ENCODE measurements at regions of chr6 and their contacts with region 1.

Region 1: DNA sequence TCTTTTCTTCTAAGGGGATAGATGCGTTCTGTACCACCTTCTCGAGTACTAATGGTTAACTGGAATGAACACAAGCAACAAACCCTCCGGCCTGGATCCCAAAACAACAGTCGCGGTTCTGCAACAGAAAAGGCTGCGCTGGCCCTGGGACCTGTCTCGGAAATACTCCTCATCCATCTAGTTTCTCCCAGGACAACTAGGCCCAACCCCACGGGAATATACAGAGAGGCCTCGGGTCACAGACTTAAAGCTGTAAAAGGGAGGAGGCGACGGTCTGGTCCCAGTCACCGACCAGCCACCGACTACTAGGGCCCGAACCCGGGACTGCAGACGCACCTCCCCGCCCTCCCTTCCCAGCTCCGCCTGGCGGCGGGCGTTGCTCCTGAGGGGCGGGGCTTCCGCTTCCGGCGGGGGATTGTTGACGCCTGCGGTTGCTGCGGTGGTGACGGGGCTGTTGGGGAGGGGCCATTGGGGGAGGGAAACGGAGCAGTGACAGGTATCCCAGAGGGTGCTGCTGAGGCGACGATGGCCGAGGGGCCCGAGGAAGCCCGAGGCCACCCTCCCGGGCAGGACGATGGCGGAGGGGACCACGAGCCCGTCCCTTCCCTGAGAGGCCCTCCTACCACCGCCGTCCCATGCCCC is at the start of gene FAM8A1:
- DNase-seq: peak; percentile 94
- ATAC-seq: peak; percentile 88
- H3K4me3 ChIP-seq: peak within 1 kb of the TSS; percentile 71
- H3K27ac ChIP-seq: no peak within 1 kb of the TSS
- H3K4me1 ChIP-seq: peaks cover 9% of the 10 kb centered on the region; the same call in 1 of the 2 replicates
- H3K27me3 ChIP-seq: no peaks in the 10 kb centered on the region
- CTCF ChIP-seq: 0 out of 2 replicates have a peak, but pooled peaks have one; percentile 19
- total RNA-seq, gene FAM8A1: 8.5 and 9.0 TPM in 2 replicates

Region 2: GRCh38 chr6:16741112-16742016 is 858.6 kb before region 1 on chr6:
- CTCF ChIA-PET with region 1: no interaction called
- POLR2A ChIA-PET with region 1: interaction called, 21 read pairs
- intact Hi-C with region 1: no loop called
- DNase-seq: peak; percentile 78
- ATAC-seq: peak; percentile 36
- H3K4me3 ChIP-seq: no peak overlapping the region
- H3K27ac ChIP-seq: peak overlapping the region; percentile 12
- H3K4me1 ChIP-seq: peaks cover 49% of the 10 kb centered on the region
- H3K27me3 ChIP-seq: no peaks in the 10 kb centered on the region
- CTCF ChIP-seq: no peak

Region 3: DNA sequence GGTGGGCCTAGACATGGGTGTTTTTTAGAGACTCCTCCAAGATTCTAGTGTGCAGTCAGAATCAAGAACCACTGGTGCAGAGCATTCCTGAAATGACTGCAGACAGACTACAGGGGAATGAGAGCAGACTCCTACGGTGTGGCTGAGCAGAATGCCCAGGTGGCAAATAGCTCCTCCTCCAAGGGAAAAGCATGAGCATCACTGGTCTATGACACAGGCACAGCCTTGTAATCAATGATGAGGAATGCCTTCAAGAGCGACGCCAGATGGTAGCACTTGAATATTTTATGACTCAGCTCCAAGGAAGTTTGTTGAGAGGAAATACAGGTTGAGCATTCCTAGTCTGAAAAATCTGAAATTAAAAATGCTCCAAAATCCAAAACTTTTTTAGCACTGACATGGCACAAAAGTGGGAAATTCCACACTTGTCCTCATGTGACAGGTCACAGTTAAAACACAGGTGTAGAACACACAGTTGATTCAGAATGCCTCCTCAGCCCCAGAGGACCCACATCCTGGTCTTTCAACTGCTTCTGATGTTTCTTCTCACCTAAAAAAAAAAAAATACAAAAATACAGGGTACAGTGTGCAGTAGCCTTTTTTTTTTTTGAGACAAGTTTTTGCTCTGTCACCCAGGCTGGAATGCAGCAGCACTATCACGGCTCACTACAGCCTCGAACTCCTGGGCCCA is 10.5 kb before region 1 on chr6:
- CTCF ChIA-PET with region 1: interaction called, 12 read pairs
- POLR2A ChIA-PET with region 1: interaction called, 3 read pairs
- intact Hi-C with region 1: no loop called
- DNase-seq: peak; percentile 93
- ATAC-seq: peak; percentile 91
- H3K4me3 ChIP-seq: no peak overlapping the region
- H3K27ac ChIP-seq: no peak overlapping the region
- H3K4me1 ChIP-seq: peaks cover 12% of the 10 kb centered on the region
- H3K27me3 ChIP-seq: no peaks in the 10 kb centered on the region
- CTCF ChIP-seq: peak; percentile 54

Region 4: DNA sequence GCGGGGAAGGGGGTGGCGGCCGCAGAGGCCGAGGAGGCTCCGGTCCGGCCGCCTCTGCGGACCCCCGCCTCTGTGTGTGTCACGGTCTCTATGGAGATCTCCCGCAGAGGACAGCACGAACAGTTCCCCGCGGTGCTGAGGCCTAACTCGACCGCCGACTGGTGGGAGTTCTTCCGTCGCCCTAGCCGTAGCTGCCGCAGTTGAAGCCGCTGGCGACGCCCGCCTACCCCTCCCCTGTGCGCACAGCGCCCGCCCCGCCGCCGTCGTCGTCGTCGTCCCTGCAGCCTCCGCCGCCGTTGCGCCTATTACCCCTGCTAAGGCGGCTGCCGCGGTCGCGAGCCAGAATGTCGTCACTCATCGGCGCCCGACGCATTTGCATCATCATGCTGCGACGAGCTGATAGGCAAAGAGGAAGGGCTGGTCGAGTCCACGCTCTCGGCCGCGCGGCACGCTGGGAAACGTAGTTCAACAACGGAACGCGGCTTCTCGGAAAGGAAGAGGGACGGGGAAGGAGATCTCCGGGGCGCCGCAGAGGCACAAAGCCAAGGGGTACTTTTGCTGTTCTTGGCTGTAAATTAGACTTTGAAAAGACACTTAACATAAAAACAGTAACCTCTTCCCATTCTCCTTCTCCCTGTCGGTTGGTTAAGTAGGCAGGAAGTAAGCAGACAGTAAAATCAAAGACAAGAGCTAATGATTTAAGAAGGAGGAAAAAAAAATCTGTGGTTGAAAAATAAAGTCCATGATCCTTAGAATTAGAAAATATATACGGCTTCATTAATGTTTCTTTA is 106.8 kb after region 1 on chr6 and contains the start of gene NUP153:
- CTCF ChIA-PET with region 1: no interaction called
- POLR2A ChIA-PET with region 1: no interaction called
- intact Hi-C with region 1: loop called (anchors 1 kb)
- DNase-seq: peak; percentile 100
- ATAC-seq: peak; percentile 72
- H3K4me3 ChIP-seq: peak within 1 kb of the TSS; percentile 88
- H3K27ac ChIP-seq: peak within 1 kb of the TSS; percentile 91
- H3K4me1 ChIP-seq: peaks cover 22% of the 10 kb centered on the region
- H3K27me3 ChIP-seq: no peaks in the 10 kb centered on the region
- CTCF ChIP-seq: no peak
- total RNA-seq, gene NUP153: 48.3 and 48.5 TPM in 2 replicates

Region 5: GRCh38 chr6:17714879-17715851 is 115.2 kb after region 1 on chr6:
- CTCF ChIA-PET with region 1: no interaction called
- POLR2A ChIA-PET with region 1: interaction called, 10 read pairs
- intact Hi-C with region 1: no loop called
- DNase-seq: peak; percentile 89
- ATAC-seq: peak; percentile 93
- H3K4me3 ChIP-seq: no peak overlapping the region
- H3K27ac ChIP-seq: no peak overlapping the region
- H3K4me1 ChIP-seq: peaks cover 17% of the 10 kb centered on the region
- H3K27me3 ChIP-seq: no peaks in the 10 kb centered on the region
- CTCF ChIP-seq: no peak

Region 6: DNA sequence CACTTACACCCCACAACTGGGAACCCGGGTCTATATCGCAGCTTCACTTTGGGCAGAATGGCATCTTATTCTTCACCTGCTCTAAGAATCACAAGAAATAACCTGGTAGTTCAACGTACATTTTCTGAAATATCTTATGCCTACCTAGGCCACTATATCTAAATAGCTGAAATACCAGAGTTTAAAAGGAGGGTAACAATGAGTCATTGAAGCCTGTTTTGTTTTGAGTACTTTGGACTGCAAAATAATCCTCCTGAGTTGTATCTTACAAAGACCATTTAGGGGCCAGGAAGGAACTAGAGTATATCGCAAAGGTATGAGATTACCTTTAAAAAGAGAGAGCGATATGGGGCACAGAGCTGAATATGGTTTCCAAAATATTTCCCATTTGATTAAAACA is 203.4 kb after region 1 on chr6:
- CTCF ChIA-PET with region 1: no interaction called
- POLR2A ChIA-PET with region 1: interaction called, 3 read pairs
- intact Hi-C with region 1: loop called (anchors 5 kb)
- DNase-seq: peak; percentile 6
- ATAC-seq: no peak
- H3K4me3 ChIP-seq: no peak overlapping the region
- H3K27ac ChIP-seq: no peak overlapping the region
- H3K4me1 ChIP-seq: peaks cover 2% of the 10 kb centered on the region; the same call in 1 of the 2 replicates
- H3K27me3 ChIP-seq: no peaks in the 10 kb centered on the region
- CTCF ChIP-seq: no peak

Measured in PC-3 (cell line).